Dorsolateral prefrontal cortex (tissue), 120 donors: ENCODE measurements at regions of chrX and their contacts with region 1.

Region 1: DNA sequence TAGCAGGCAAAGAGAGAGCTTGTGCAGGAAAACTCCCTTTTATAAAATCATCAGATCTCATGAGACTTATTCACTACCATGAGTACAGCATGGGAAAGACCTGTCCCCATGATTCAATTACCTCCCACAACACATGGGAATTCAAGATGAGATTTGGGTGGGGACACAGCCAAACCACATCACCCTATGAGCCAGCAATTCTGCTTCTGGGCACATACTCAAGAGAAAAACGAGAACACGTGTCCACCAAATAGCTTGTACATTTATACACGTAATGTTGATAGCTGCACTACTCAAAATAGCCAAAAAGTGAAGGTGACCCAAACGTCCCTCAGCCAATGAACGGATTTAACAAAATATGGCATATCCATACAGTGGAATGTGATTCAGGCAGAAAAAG is 94.5 kb upstream of the DHRSX start:
- DNase-seq: no peak
- H3K4me3 ChIP-seq: no peak overlapping the region
- H3K27ac ChIP-seq: no peak overlapping the region
- H3K27me3 ChIP-seq: peaks cover 0 to 48% (median 4%) of the 10 kb centered on the region in 45 donors
- CTCF ChIP-seq: no peak

Region 2: GRCh38 chrX:1649621-1650020 is 945.6 kb before region 1 on chrX:
- intact Hi-C with region 1: loop called (anchors 2 kb)
- DNase-seq: no peak
- H3K4me3 ChIP-seq: peak overlapping the region in 2 of 59 donors; percentile 5 to 36
- H3K27ac ChIP-seq: no peak overlapping the region
- H3K27me3 ChIP-seq: peaks cover 0 to 30% (median 0%) of the 10 kb centered on the region in 45 donors
- CTCF ChIP-seq: no peak

Region 3: DNA sequence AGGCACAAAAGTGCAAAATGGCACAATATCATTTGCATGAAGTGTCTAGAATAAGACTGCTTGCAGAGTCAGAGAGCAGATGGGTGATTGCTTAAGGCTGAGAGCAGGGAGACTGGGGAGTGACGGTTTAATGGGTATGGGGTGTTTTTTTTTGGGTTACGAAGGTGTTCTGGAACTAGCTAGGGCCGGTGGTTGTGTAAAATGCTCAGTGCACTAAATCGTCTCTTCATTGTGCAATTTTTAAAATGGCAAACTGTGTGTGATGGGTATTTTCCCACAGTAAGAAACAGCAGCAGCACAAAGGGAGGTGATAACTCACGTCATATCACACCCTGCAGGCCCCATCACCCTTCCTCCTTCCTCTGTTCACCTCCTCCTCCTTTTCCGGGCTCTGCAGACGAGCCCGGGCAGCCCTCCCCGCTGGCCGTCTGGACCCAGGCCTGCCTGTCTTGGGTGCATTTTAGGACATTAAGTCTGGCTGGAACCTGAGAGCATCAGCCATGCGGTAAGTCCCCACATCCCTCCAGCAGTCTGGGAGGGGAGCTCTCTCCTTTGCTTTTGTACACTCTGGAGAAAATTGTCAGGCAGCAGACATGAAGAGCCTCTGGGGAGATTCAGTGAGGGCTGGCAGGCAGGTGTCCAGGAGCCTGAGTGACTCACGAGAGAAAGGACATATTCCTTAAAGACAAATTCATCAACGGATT is 937.7 kb before region 1 on chrX:
- intact Hi-C with region 1: loop called in 1 of 2 experiments (anchors 2 kb)
- DNase-seq: peak in 1 of 10 donors; percentile 34
- H3K4me3 ChIP-seq: no peak overlapping the region
- H3K27ac ChIP-seq: peak overlapping the region in 1 of 59 donors; percentile 9
- H3K27me3 ChIP-seq: peaks cover 0 to 16% (median 0%) of the 10 kb centered on the region in 45 donors
- CTCF ChIP-seq: peak in 1 of 56 donors; percentile 12

Region 4: GRCh38 chrX:1700757-1701156 is 894.5 kb before region 1 on chrX:
- intact Hi-C with region 1: no loop called
- DNase-seq: peak in 1 of 10 donors; percentile 10
- H3K4me3 ChIP-seq: no peak overlapping the region
- H3K27ac ChIP-seq: no peak overlapping the region
- H3K27me3 ChIP-seq: no peaks in the 10 kb centered on the region
- CTCF ChIP-seq: no peak